ENCODE measurements at regions of chr11 and their contacts with region 1.

Region 1: GRCh38 chr11:128157423-128158298 is 429.7 kb downstream of the ETS1 start:
- DNase-seq: peak; percentile 66
- H3K4me3 ChIP-seq: peak overlapping the region; percentile 34
- H3K27ac ChIP-seq: peak overlapping the region; percentile 69
- H3K27me3 ChIP-seq: no peaks in the 10 kb centered on the region
- CTCF ChIP-seq: peak; percentile 79

Region 2: GRCh38 chr11:128039140-128040021 is 118.3 kb before region 1 on chr11:
- in situ Hi-C with region 1: loop called (anchors 25 kb)
- DNase-seq: peak; percentile 45
- H3K4me3 ChIP-seq: no peak overlapping the region
- H3K27ac ChIP-seq: no peak overlapping the region
- H3K27me3 ChIP-seq: no peaks in the 10 kb centered on the region
- CTCF ChIP-seq: no peak

Region 3: DNA sequence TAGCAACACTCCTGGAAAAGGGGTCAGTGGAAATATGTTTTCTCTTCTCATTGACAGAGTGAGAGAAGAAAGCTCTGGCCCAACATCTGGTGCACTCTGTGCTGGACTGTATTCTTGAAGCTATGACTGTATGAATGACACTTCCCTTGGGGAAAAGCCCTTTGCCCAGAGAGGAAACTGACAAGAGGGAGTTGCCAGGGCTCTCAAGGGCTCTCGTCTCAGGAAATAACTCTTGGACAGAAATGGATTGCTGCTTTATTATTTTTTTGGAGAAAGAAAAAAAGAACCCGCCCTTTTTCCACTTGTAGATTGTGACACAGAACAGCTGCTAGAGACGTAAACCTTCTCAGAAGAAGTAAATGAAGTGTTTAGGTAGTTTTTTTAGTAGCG is 418.3 kb after region 1 on chr11:
- in situ Hi-C with region 1: no loop called
- DNase-seq: no peak
- H3K4me3 ChIP-seq: no peak overlapping the region
- H3K27ac ChIP-seq: no peak overlapping the region
- H3K27me3 ChIP-seq: no peaks in the 10 kb centered on the region
- CTCF ChIP-seq: no peak

Region 4: GRCh38 chr11:128831174-128832120 is 673.8 kb after region 1 on chr11:
- in situ Hi-C with region 1: loop called (anchors 25 kb)
- DNase-seq: peak; percentile 84
- H3K4me3 ChIP-seq: no peak overlapping the region
- H3K27ac ChIP-seq: no peak overlapping the region
- H3K27me3 ChIP-seq: no peaks in the 10 kb centered on the region
- CTCF ChIP-seq: peak; percentile 86